Thyroid gland (tissue), 4 donors: ENCODE measurements at regions of chr13 and their contacts with region 1.

Region 1: DNA sequence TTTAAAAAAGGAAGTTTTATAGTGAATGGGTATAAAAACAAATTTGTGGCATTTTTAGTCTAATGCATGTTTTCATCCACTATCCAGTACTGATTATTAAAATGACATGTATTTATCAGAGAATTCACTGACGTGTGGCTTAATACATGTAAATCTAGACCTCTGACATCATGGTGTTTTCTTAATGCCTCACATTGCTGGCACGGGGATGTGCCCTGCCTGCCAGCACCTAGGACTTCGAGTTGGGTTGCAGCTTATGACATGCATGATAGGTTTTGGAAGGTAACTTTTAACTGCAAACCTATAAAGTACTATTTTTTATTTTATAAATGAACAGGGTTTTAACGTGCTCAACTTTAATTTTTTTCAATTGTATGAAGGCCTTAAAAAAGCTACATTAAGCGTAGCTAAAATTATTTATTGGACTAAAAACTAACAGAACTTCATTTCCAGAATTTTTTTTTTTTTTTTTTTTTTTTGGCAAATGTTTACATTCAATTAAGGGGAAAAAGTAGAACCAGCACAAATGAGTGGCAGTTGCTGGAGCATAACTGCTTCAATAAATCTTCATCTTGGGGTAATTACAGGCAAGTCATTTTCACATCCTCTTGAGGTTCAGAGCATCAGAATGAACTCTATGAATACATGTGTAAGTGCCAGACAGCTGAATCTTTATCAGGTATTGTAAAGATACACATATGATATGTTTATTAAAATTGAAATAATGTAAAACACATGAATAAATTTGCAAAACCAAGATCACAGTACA is 16.3 kb downstream of the METTL21C start:
- DNase-seq: peak; percentile 87 to 88
- H3K4me3 ChIP-seq: no peak overlapping the region
- H3K27ac ChIP-seq: peak overlapping the region; percentile 57 to 72 (median 58)
- H3K4me1 ChIP-seq: peaks cover 27 to 30% of the 10 kb centered on the region in 2 donors
- H3K27me3 ChIP-seq: no peaks in the 10 kb centered on the region
- CTCF ChIP-seq: no peak
- POLR2A ChIP-seq: no peak

Region 2: GRCh38 chr13:102609696-102610095 is 68.8 kb before region 1 on chr13:
- intact Hi-C with region 1: loop called (anchors 10 kb)
- DNase-seq: no peak
- H3K4me3 ChIP-seq: no peak overlapping the region
- H3K27ac ChIP-seq: no peak overlapping the region
- H3K4me1 ChIP-seq: no peaks in the 10 kb centered on the region
- H3K27me3 ChIP-seq: no peaks in the 10 kb centered on the region
- CTCF ChIP-seq: no peak
- POLR2A ChIP-seq: no peak

Region 3: GRCh38 chr13:102620516-102620915 is 58.0 kb before region 1 on chr13:
- intact Hi-C with region 1: no loop called
- DNase-seq: no peak
- H3K4me3 ChIP-seq: no peak overlapping the region
- H3K27ac ChIP-seq: no peak overlapping the region
- H3K4me1 ChIP-seq: no peaks in the 10 kb centered on the region
- H3K27me3 ChIP-seq: no peaks in the 10 kb centered on the region
- CTCF ChIP-seq: no peak
- POLR2A ChIP-seq: no peak

Region 4: GRCh38 chr13:102928941-102929675 is 250.6 kb after region 1 on chr13:
- intact Hi-C with region 1: no loop called
- DNase-seq: no peak
- H3K4me3 ChIP-seq: no peak overlapping the region
- H3K27ac ChIP-seq: no peak overlapping the region
- H3K4me1 ChIP-seq: no peaks in the 10 kb centered on the region
- H3K27me3 ChIP-seq: no peaks in the 10 kb centered on the region
- CTCF ChIP-seq: no peak
- POLR2A ChIP-seq: no peak